ENCODE measurements at regions of chr4 and their contacts with region 1.

Region 1: GRCh38 chr4:109559983-109560686 is at the start of gene MCUB:
- DNase-seq: peak; percentile 95
- ATAC-seq: peak; percentile 90
- H3K4me3 Mint-ChIP-seq: peak within 1 kb of the TSS; percentile 85
- H3K27ac Mint-ChIP-seq: peak within 1 kb of the TSS; percentile 97
- H3K4me1 Mint-ChIP-seq: peaks cover 48% of the 10 kb centered on the region
- H3K27me3 Mint-ChIP-seq: no peaks in the 10 kb centered on the region
- CTCF ChIP-seq: no peak
- total RNA-seq, gene MCUB: 62.3 to 65.3 TPM

Region 2: GRCh38 chr4:109574102-109574850 is 14.1 kb after region 1 on chr4:
- CTCF ChIA-PET with region 1: interaction called, 14 read pairs
- POLR2A ChIA-PET with region 1: interaction called, 14 read pairs
- intact Hi-C with region 1: no loop called
- DNase-seq: no peak
- ATAC-seq: peak; percentile 38
- H3K4me3 Mint-ChIP-seq: peak overlapping the region; percentile 46
- H3K27ac Mint-ChIP-seq: peak overlapping the region; percentile 77
- H3K4me1 Mint-ChIP-seq: peaks cover 64% of the 10 kb centered on the region
- H3K27me3 Mint-ChIP-seq: no peaks in the 10 kb centered on the region
- CTCF ChIP-seq: no peak

Region 3: GRCh38 chr4:109588176-109588575 is 28.0 kb after region 1 on chr4:
- CTCF ChIA-PET with region 1: no interaction called
- POLR2A ChIA-PET with region 1: interaction called, 10 read pairs
- intact Hi-C with region 1: no loop called
- DNase-seq: peak; percentile 83
- ATAC-seq: peak; percentile 99
- H3K4me3 Mint-ChIP-seq: peak overlapping the region; percentile 50
- H3K27ac Mint-ChIP-seq: peak overlapping the region; percentile 86
- H3K4me1 Mint-ChIP-seq: peaks cover 66% of the 10 kb centered on the region
- H3K27me3 Mint-ChIP-seq: no peaks in the 10 kb centered on the region
- CTCF ChIP-seq: no peak

Region 4: DNA sequence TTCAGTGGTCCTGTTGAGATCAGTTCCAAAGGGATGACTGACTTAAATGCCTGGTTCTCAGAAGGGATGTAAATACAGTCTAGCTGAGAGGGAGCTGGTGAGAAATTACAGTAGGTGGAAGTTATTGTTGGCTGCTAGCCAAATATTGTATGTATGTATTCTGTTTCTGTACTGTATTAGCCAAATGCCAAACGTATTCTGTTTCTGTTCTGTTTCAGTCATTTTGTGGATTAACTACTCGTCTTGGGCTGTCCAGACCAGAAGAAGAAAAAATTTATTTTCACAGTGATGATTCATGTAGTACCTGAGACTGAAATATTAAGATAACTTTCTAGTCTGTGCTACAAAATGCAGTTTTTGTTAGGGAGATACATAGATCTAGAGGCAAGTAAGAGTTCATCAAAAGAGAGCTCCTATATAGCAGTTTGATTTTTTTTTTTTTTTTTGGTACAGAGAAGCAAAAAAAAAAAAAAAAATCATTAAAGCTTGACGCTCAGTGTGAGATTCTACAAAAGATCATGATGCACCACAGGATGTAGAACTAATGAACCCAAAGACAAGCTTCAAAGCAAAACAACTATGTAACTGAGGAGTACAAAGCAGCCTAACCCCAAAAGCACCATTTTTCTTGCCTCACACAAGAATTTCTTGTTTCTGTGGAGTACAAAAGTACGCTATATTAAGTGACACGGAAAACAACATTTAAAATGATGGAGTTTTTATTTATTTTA is 88.3 kb after region 1 on chr4:
- CTCF ChIA-PET with region 1: interaction called, 4 read pairs
- POLR2A ChIA-PET with region 1: interaction called, 11 read pairs
- intact Hi-C with region 1: loop called (anchors 5 kb)
- DNase-seq: no peak
- ATAC-seq: peak; percentile 60
- H3K4me3 Mint-ChIP-seq: peak overlapping the region; percentile 47
- H3K27ac Mint-ChIP-seq: peak overlapping the region; percentile 89
- H3K4me1 Mint-ChIP-seq: peaks cover 37% of the 10 kb centered on the region
- H3K27me3 Mint-ChIP-seq: no peaks in the 10 kb centered on the region
- CTCF ChIP-seq: no peak

Region 5: DNA sequence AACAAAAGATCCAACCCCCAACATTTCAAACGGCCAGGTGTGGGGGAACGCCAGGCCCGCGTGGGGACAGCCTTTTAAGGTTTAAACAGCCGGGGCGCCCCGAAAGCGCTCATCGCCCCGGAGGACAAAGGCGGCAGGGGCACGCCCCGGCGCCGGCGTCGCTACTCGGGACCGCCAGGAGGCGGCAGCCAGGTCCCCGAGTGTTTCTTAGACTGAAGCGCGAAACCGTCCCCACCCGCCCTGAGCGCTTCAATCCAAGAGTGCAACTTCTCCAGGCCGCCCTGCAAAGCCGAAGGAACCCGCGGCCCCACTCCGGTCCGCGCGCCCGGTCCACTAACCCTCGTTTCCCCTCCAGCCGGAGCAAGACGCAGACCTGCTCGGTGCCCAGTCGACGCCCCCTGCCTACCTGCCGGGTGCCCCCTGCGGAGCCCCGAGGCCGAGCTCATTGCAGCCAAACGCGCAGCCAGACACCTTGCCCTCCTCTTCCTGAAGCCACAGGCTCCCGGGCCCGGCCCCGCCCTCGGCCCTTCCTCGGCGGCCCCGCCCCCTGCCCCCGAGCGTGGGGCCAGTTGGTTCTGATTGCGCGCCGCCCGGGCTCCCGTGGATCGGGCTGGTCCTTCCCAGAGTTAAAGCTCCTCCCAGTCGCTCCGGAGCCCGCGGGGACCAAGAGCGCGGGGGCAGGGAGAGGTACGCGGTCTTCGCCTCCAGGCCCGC is 143.0 kb after region 1 on chr4 and contains the start of gene CASP6:
- CTCF ChIA-PET with region 1: interaction called, 7 read pairs
- POLR2A ChIA-PET with region 1: interaction called, 20 read pairs
- intact Hi-C with region 1: loop called (anchors 5 kb)
- DNase-seq: peak; percentile 82
- ATAC-seq: peak; percentile 85
- H3K4me3 Mint-ChIP-seq: peak within 1 kb of the TSS; percentile 91
- H3K27ac Mint-ChIP-seq: peak within 1 kb of the TSS; percentile 91
- H3K4me1 Mint-ChIP-seq: peaks cover 23% of the 10 kb centered on the region
- H3K27me3 Mint-ChIP-seq: no peaks in the 10 kb centered on the region
- CTCF ChIP-seq: peak; percentile 71
- total RNA-seq, gene CASP6: 19.1 to 28.3 TPM

Region 6: GRCh38 chr4:109864134-109864533 is 304.0 kb after region 1 on chr4:
- CTCF ChIA-PET with region 1: no interaction called
- POLR2A ChIA-PET with region 1: no interaction called
- intact Hi-C with region 1: no loop called
- DNase-seq: no peak
- ATAC-seq: no peak
- H3K4me3 Mint-ChIP-seq: no peak overlapping the region
- H3K27ac Mint-ChIP-seq: no peak overlapping the region
- H3K4me1 Mint-ChIP-seq: no peaks in the 10 kb centered on the region
- H3K27me3 Mint-ChIP-seq: no peaks in the 10 kb centered on the region
- CTCF ChIP-seq: no peak

Measured in activated CD8-positive, alpha-beta T cell treated with anti-CD3 and anti-CD28 coated beads for 36 hours (primary cell).